GM13977 (cell line): ENCODE measurements at regions of chr5 and their contacts with region 1.

Region 1: GRCh38 chr5:83740741-83741140 is 20.1 kb upstream of the HAPLN1 start:
- DNase-seq: no peak
- CTCF ChIP-seq: no peak

Region 2: GRCh38 chr5:84088995-84089394 is 348.3 kb after region 1 on chr5:
- in situ Hi-C with region 1: no loop called
- DNase-seq: no peak
- CTCF ChIP-seq: peak; percentile 28

Region 3: DNA sequence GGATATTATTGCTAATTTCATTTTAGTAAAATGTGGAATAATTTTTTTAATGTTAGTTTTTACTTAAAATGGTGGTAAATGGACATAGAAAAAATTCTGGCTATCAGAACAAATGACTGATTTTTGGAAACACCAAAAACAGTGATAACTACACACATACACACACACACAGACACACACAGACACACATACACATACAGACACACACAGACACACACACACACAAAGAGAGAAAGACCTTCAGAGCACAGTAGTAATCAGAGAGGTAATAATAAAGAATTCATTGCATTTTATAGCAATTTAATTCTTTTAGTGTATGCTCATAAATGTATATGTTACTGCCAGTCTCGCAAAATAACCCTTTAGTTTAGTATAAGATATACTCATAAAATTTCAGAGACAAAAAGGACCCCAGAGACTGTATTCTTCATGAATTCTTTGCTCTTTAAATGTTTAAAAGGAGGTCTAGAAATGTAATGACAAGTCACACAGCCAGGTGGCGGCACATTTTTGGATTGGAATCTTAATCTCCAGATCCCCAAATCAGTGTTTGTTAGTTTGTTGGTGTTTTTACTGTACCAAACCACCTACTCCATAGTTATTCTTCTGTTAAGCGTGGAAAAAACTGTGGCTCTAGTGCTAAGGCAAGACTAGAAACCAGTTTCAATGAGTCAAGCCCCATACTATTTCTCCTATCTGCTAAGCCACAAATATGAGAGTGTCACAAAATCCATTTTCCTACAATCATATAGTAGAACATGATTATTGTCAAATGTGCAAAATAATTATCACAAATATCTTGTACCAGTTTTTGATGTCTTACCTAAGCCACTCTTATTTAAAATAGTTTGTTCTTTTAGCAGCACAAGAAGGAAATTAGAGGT is 534.1 kb after region 1 on chr5:
- in situ Hi-C with region 1: loop called (anchors 25 kb)
- DNase-seq: peak; percentile 7
- CTCF ChIP-seq: peak; percentile 54